PC-9 (cell line): ENCODE measurements at regions of chr19 and their contacts with region 1.

Region 1: GRCh38 chr19:44051654-44052402 is at the start of gene ZNF223:
- DNase-seq: peak; percentile 94 to 97
- H3K4me3 ChIP-seq: peak within 1 kb of the TSS; percentile 64
- H3K27ac ChIP-seq: peak within 1 kb of the TSS; percentile 42
- H3K4me1 ChIP-seq: peaks cover 17% of the 10 kb centered on the region
- H3K27me3 ChIP-seq: no peaks in the 10 kb centered on the region
- CTCF ChIP-seq: no peak
- total RNA-seq, gene ZNF223: 3.5 and 4.2 TPM in 2 replicates

Region 2: GRCh38 chr19:43934985-43935708 is 116.7 kb before region 1 on chr19 and contains the start of gene ZNF45:
- CTCF ChIA-PET with region 1: no interaction called
- POLR2A ChIA-PET with region 1: no interaction called
- intact Hi-C with region 1: loop called (anchors 5 kb)
- DNase-seq: peak; percentile 74 to 81
- H3K4me3 ChIP-seq: peak within 1 kb of the TSS; percentile 88
- H3K27ac ChIP-seq: no peak within 1 kb of the TSS
- H3K4me1 ChIP-seq: peaks cover 11% of the 10 kb centered on the region
- H3K27me3 ChIP-seq: peaks cover under 1% of the 10 kb centered on the region; the same call in 1 of the 2 replicates
- CTCF ChIP-seq: no peak
- total RNA-seq, gene ZNF45: 6.9 and 10.3 TPM in 2 replicates

Region 3: GRCh38 chr19:43983912-43984686 is 67.7 kb before region 1 on chr19 and contains the start of gene ZNF155:
- CTCF ChIA-PET with region 1: no interaction called
- POLR2A ChIA-PET with region 1: no interaction called
- intact Hi-C with region 1: loop called (anchors 1 kb)
- DNase-seq: peak; percentile 84 to 94
- H3K4me3 ChIP-seq: peak within 1 kb of the TSS; percentile 82
- H3K27ac ChIP-seq: 0 out of 2 replicates have a peak within 1 kb of the TSS, but pooled peaks have one; percentile 4
- H3K4me1 ChIP-seq: no peaks in the 10 kb centered on the region; the same call in 1 of the 2 replicates
- H3K27me3 ChIP-seq: no peaks in the 10 kb centered on the region
- CTCF ChIP-seq: no peak
- total RNA-seq, gene ZNF155: 5.0 and 6.1 TPM in 2 replicates

Region 4: DNA sequence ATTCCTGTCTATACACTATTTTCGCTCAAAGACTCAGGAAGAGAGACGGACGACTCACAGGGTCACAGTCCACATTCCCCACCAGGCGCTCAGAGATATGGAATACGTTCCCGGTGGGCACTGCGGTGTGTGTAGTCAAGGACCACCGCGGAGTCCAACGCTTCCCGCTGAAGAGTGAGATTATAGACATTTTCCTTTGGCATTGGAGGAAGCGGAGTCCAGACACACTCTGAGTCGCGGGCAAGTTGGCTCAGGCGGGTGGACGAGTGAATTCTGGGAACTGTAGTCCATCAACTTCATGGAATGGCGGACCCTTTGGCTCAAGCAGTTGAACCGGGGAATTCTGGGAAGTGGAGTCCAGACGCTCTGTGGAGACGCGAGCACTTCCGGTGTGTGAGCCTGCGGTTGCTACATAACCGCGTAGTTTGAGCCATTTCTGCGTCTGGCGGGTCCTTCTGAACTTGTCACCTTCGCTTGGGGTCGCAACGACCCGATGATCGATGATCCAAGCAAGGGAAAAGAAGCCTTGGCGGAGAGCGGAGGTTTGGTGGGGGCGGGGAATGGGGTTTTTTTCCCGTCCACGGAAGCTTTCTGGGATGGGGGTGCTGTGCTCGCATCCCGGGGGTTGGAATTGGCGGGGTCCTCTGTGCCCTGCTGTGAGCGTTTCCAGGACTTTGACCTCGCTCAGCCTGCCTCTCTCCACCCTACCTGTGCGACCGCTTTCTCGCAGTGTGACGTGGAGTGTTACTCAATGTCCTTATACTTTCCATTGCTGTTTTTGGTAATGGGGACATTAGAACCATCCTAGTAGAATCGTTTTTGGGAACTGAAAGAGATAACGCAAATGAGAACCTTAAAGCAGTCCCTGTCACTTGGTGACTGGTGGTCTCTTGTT is 49.0 kb before region 1 on chr19 and contains the start of gene ZNF230:
- CTCF ChIA-PET with region 1: no interaction called
- POLR2A ChIA-PET with region 1: no interaction called
- intact Hi-C with region 1: loop called (anchors 1 kb)
- DNase-seq: peak; percentile 79 to 94
- H3K4me3 ChIP-seq: peak within 1 kb of the TSS; percentile 86
- H3K27ac ChIP-seq: no peak within 1 kb of the TSS
- H3K4me1 ChIP-seq: peaks cover 13% of the 10 kb centered on the region
- H3K27me3 ChIP-seq: no peaks in the 10 kb centered on the region
- CTCF ChIP-seq: no peak
- total RNA-seq, gene ZNF230: 4.0 and 4.8 TPM in 2 replicates

Region 5: GRCh38 chr19:44025217-44025936 is 26.5 kb before region 1 on chr19 and contains the start of gene ZNF222:
- CTCF ChIA-PET with region 1: no interaction called
- POLR2A ChIA-PET with region 1: no interaction called
- intact Hi-C with region 1: loop called (anchors 2 kb)
- DNase-seq: peak; percentile 62 to 77
- H3K4me3 ChIP-seq: peak within 1 kb of the TSS; percentile 84
- H3K27ac ChIP-seq: no peak within 1 kb of the TSS
- H3K4me1 ChIP-seq: peaks cover 13% of the 10 kb centered on the region
- H3K27me3 ChIP-seq: no peaks in the 10 kb centered on the region
- CTCF ChIP-seq: no peak
- total RNA-seq, gene ZNF222: 1.8 and 2.1 TPM in 2 replicates

Region 6: DNA sequence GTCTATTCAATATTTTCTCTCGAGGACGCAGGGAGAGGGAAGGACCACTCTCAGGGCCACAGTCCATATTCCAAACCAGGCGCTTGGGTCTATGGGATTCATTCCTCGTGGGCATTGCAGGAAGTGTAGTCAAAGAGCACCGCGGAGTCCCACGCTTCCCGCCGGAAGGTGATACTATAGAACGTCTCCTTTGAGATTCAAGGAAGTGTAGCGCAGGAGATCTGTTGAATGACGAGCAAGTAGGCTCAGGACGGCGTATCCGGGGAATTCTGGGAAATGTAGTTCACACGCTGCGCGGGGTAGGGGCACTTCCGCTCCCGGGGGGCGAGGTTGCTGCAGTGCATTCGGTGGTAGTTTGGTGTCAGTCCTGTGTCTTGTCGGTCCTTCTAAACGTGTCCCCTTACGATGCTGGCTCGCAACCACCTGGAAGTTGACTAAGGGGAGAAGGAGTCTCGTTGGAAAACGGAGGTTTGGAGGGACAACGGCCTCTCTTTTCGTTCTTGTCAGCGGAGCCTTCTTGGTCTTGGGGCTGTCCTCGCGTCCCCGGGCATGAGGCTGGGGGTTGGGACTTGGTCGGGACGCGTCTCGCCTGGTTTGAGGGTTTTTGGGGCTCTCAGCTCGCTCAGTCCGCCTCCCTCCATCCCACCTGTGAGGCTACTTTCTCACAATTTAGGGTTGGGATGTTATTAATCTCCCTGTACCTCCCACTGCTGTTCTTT is 20.2 kb after region 1 on chr19 and contains the start of gene ZNF284:
- CTCF ChIA-PET with region 1: no interaction called
- POLR2A ChIA-PET with region 1: no interaction called
- intact Hi-C with region 1: loop called (anchors 2 kb)
- DNase-seq: peak; percentile 84 to 88
- H3K4me3 ChIP-seq: peak within 1 kb of the TSS; percentile 70
- H3K27ac ChIP-seq: peak within 1 kb of the TSS; percentile 17; the same call in 1 of the 2 replicates
- H3K4me1 ChIP-seq: peaks cover 7% of the 10 kb centered on the region; the same call in 1 of the 2 replicates
- H3K27me3 ChIP-seq: no peaks in the 10 kb centered on the region
- CTCF ChIP-seq: no peak
- total RNA-seq, gene ZNF284: 1.9 and 2.0 TPM in 2 replicates

Region 7: GRCh38 chr19:44093931-44094765 is 42.3 kb after region 1 on chr19 and contains the start of gene ZNF224:
- CTCF ChIA-PET with region 1: no interaction called
- POLR2A ChIA-PET with region 1: no interaction called
- intact Hi-C with region 1: loop called (anchors 2 kb)
- DNase-seq: peak; percentile 85
- H3K4me3 ChIP-seq: peak within 1 kb of the TSS; percentile 65
- H3K27ac ChIP-seq: peak within 1 kb of the TSS; percentile 10; the same call in 1 of the 2 replicates
- H3K4me1 ChIP-seq: peaks cover 19% of the 10 kb centered on the region
- H3K27me3 ChIP-seq: no peaks in the 10 kb centered on the region
- CTCF ChIP-seq: no peak
- total RNA-seq, gene ZNF224: 29.3 and 30.9 TPM in 2 replicates